ENCODE measurements at regions of chr3 and their contacts with region 1.

Region 1: DNA sequence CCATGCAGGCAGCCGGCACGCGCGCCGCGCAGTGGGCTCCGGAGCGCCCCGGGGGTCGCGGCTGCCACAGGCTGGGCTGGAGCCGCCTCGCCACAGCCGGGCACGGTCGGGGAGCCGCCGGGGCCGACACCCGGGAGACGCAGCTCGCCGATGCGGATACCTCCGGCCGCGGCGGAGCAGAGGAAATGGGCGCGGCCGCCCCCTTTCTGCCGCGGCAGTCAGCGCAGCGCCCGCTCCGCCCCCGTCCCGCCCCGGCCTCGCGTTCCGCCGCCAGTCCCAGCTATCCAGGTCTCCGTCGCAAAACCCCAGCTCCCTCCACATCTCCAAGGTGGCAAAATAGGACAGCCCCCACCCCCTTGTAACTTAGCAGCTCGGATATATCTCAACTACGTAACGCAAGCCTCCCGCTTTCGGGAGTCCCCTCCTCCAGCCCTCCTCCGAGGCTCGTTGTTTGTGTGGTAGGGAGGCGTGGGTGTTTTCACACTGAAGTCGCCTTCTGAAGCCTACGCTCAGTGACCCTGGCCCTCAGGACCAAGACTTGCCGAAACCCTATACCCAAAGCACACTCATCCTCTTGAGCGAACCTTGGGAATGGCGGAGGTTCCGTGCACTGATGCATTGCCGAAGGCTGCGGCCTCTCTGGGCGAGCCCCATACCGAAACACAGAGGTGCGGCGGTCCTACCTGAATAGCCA is at the start of gene SH3BP5:
- DNase-seq: peak; percentile 74
- H3K4me3 Mint-ChIP-seq: peak within 1 kb of the TSS; percentile 89
- H3K27ac Mint-ChIP-seq: peak within 1 kb of the TSS; percentile 57
- H3K4me1 Mint-ChIP-seq: peaks cover 50% of the 10 kb centered on the region
- H3K27me3 Mint-ChIP-seq: peaks cover 2% of the 10 kb centered on the region
- total RNA-seq, gene SH3BP5: 7.9 to 9.0 TPM

Region 2: GRCh38 chr3:15291589-15292541 is 40.7 kb before region 1 on chr3:
- CTCF ChIA-PET with region 1: interaction called, 8 read pairs
- intact Hi-C with region 1: loop called (anchors 1 kb)
- DNase-seq: peak; percentile 84
- H3K4me3 Mint-ChIP-seq: peak overlapping the region; percentile 0
- H3K27ac Mint-ChIP-seq: peak overlapping the region; percentile 76
- H3K4me1 Mint-ChIP-seq: peaks cover 72% of the 10 kb centered on the region
- H3K27me3 Mint-ChIP-seq: no peaks in the 10 kb centered on the region

Region 3: DNA sequence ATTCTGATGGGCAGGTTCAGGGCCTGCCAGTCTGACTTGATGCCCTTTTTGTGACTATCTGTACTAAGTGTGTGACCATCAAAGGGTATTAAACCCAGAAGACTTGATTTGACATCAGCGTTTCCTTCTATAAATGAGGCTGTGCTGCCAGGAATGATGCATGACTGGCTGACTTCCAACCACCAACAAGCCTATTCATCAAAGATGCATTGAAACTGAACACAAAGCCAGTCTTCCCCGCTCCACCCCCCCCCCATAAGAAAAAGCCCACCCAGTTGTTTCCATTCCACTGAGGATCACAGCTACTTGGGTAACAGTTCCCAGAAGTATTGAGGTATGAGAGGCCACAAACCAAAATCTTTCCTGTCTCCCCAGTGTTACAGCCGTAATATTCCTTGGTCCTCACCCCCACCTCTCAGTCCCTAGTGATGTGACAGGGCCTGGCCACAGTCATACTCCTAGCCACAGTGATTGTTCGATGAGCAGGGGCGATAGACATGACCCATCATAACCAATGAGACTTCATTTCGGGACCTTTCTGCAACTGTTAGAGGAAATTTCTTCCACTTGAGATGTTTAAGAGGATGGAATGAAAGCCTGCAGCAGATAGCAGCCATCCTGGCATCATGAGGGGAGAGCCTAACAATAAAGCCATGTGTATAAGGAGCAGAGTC is 22.8 kb before region 1 on chr3:
- CTCF ChIA-PET with region 1: interaction called, 8 read pairs
- intact Hi-C with region 1: loop called (anchors 1 kb)
- DNase-seq: peak; percentile 76
- H3K4me3 Mint-ChIP-seq: no peak overlapping the region
- H3K27ac Mint-ChIP-seq: peak overlapping the region; percentile 95
- H3K4me1 Mint-ChIP-seq: peaks cover 66% of the 10 kb centered on the region
- H3K27me3 Mint-ChIP-seq: no peaks in the 10 kb centered on the region

Region 4: DNA sequence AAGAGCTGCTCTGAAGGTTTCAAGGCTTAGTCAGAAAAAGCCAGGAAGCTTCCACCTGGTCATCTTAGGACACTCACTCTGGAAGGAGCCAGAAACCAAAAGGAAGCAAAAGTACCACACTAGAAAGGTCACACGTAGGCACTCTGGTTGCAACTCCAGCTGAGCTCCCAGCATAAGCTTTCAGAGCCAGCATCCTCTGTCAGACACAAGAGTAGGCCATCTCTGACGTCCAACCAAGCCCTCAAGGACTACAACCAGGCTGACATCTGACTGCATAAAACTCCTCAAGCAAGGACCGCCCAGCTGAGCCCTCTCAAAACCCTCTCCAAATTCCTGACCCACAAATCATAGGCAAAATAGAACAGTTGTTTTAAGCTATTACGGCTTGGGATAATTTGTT is 13.0 kb before region 1 on chr3:
- CTCF ChIA-PET with region 1: interaction called, 12 read pairs
- intact Hi-C with region 1: no loop called
- DNase-seq: no peak
- H3K4me3 Mint-ChIP-seq: no peak overlapping the region
- H3K27ac Mint-ChIP-seq: no peak overlapping the region
- H3K4me1 Mint-ChIP-seq: peaks cover 60% of the 10 kb centered on the region
- H3K27me3 Mint-ChIP-seq: no peaks in the 10 kb centered on the region

Region 5: DNA sequence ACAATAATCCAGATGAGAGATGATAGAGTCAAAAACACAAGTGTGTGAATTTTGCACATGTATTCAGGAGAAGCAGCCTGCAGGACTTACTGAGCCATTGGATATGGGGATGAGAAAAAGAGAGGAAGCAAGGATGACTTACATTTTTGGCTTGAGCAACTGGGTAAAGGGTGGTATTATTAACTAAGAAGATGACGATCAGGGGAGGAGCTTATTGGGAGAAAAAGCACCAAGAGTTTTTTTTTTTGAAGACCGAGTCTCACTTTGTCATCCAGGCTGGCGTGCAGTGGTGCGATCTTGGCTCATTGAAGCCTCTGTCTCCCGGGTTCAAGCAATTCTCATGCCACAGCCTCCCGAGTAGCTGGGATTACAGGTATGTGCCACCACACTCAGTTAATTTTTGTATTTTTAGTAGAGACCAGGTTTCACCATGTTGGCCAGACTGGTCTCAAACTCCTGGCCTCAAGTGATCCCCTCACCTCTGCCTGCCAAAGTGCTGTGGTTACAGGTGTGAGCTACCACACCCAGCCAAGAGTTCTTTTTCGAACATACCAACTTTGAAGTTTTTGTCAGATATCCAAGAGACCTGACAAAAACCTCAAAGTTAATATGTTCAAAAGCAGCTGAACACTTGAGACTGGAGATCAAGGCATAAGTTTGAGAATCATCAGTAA is 14.6 kb after region 1 on chr3:
- CTCF ChIA-PET with region 1: interaction called, 10 read pairs
- intact Hi-C with region 1: no loop called
- DNase-seq: no peak
- H3K4me3 Mint-ChIP-seq: no peak overlapping the region
- H3K27ac Mint-ChIP-seq: no peak overlapping the region
- H3K4me1 Mint-ChIP-seq: peaks cover 40% of the 10 kb centered on the region
- H3K27me3 Mint-ChIP-seq: no peaks in the 10 kb centered on the region

Region 6: DNA sequence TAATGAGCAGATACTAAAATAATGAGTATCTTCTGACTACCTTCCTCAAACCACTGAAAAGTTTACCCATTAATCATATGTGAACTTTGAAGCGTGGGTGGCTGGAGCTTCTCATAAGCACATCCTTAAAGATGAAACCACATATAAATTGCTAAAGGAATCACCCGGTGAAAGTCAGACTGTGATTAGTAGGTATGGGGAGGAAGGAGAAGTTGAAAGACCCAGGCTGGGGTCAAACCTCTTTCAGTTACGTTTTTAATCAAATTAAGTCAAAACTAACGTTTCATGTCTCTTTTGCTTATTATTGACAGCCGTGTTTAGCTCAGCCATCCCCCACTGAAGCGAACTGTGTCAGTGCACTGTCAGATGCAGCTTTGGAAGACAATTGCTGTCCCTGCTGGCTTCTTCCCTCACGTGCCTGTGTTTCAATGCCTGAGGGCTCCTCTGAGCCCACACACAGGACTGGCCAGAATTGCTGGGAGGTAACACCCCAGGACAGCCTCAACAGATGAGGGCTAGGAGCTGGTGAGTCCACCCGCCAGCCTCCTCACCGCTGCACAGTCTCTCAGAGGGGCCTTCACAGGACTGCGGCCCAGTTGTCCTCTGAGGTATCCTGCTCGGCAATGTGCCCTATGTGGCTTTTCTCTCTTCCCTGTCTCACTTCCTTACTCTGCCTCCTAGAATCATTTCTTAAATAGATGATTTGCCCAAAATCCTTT is 29.1 kb after region 1 on chr3:
- CTCF ChIA-PET with region 1: interaction called, 15 read pairs
- intact Hi-C with region 1: loop called (anchors 1 kb)
- DNase-seq: peak; percentile 86
- H3K4me3 Mint-ChIP-seq: no peak overlapping the region
- H3K27ac Mint-ChIP-seq: peak overlapping the region; percentile 83
- H3K4me1 Mint-ChIP-seq: peaks cover 42% of the 10 kb centered on the region
- H3K27me3 Mint-ChIP-seq: peaks cover 2% of the 10 kb centered on the region

Region 7: GRCh38 chr3:15831930-15832329 is 499.4 kb after region 1 on chr3:
- CTCF ChIA-PET with region 1: no interaction called
- intact Hi-C with region 1: no loop called
- DNase-seq: no peak
- H3K4me3 Mint-ChIP-seq: no peak overlapping the region
- H3K27ac Mint-ChIP-seq: no peak overlapping the region
- H3K4me1 Mint-ChIP-seq: peaks cover 10% of the 10 kb centered on the region
- H3K27me3 Mint-ChIP-seq: no peaks in the 10 kb centered on the region